ENCODE measurements at regions of chr15 and their contacts with region 1.

Region 1: GRCh38 chr15:101652098-101652782 is at the start of gene TM2D3:
- DNase-seq: peak; percentile 98
- H3K4me3 ChIP-seq: peak within 1 kb of the TSS; percentile 88 to 92
- H3K27ac ChIP-seq: peak within 1 kb of the TSS; percentile 90 to 96
- H3K4me1 ChIP-seq: peaks cover 17 to 22% of the 10 kb centered on the region in 2 experiments; a peak in 3 of 4 replicates
- H3K27me3 ChIP-seq: no peaks in the 10 kb centered on the region
- CTCF ChIP-seq: peak; percentile 61
- EP300 ChIP-seq: no peak; a peak in 1 of 4 replicates
- RAD21 ChIP-seq: peak; percentile 32; the same call in 1 of the 2 replicates
- polyA plus RNA-seq, gene TM2D3: 71.6 and 73.3 TPM in 2 replicates

Region 2: DNA sequence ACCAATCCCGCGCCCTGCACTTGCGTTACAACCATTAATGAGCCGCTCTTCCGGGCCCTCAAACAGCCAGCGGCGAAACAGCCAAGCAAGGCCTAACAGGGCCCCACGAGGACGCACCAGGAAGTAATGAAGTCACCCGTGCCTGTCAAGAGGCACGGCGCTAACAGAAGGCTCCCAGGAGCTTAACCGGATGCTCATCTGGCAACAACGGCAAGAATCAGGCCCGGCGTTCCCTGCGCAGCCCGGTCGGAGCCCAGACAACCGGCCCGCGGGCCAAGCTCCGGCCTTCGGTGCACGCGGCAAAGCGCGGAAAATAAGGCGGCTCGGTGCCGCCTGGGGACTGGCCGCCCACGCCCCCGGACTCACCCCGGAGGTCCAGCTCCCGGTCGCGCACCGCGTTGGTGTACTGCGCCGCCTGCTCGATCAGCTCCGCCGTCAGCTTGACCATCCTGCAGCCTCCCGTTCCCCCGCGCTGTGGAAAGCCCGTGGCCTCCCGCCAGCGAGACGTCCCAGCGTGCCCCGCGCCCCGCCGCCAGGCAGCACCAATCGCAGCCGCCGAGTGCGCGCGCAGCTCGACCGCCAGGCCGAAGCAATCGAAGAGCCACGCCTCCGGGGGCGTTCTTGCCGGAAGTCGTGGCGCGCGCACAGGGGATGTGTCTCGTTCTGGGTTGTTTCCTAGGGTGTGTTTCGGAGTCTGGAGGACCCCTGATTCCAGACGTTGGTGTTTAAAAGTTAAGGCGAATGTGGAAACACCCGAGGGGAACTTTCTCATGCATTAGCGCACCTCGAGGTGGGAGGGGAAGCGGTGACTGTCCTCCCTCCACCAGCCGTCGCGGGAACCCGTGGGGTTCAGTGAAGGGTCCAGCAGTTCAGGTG is 357.3 kb before region 1 on chr15 and contains the start of gene SNRPA1:
- CTCF ChIA-PET with region 1: interaction called, 10 read pairs
- POLR2A ChIA-PET with region 1: interaction called, 3 read pairs
- DNase-seq: peak; percentile 99
- H3K4me3 ChIP-seq: peak within 1 kb of the TSS; percentile 82 to 98
- H3K27ac ChIP-seq: peak within 1 kb of the TSS; percentile 87 to 94
- H3K4me1 ChIP-seq: peaks cover 8 to 12% of the 10 kb centered on the region in 2 experiments; a peak in 2 of 4 replicates
- H3K27me3 ChIP-seq: no peaks in the 10 kb centered on the region
- CTCF ChIP-seq: no peak
- EP300 ChIP-seq: 0 out of 4 replicates have a peak, but pooled peaks of 1 of the 2 experiments have one; percentile 18
- RAD21 ChIP-seq: no peak
- polyA plus RNA-seq, gene SNRPA1: 59.9 and 62.3 TPM in 2 replicates

Region 3: GRCh38 chr15:101318839-101319238 is 333.4 kb before region 1 on chr15:
- CTCF ChIA-PET with region 1: no interaction called
- POLR2A ChIA-PET with region 1: no interaction called
- DNase-seq: peak; percentile 57
- H3K4me3 ChIP-seq: no peak overlapping the region
- H3K27ac ChIP-seq: no peak overlapping the region
- H3K4me1 ChIP-seq: peaks cover 0 to 14% of the 10 kb centered on the region in 2 experiments; a peak in 1 of 4 replicates
- H3K27me3 ChIP-seq: no peaks in the 10 kb centered on the region; the same call in 1 of the 2 replicates
- CTCF ChIP-seq: no peak
- EP300 ChIP-seq: no peak
- RAD21 ChIP-seq: no peak

Region 4: DNA sequence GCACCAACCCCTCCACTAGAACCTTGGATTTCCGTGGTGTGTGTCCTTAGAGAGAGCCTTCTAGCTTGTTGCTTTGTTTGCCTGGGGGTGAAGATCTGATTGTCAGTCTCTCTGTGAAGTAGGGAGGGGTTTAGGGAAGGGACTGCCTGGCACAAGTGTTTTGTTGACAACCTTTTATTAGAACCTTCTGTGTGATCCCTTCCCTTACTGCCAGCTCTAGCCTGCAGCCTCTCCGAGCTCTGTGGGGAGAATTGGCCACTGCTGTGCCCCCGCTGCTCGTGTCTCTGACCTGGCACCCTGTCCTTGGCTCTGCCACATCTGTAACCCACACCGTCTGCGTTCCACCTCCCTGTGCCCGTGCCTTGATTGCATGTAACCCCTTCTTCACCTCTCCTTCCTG is 131.8 kb before region 1 on chr15:
- CTCF ChIA-PET with region 1: no interaction called
- POLR2A ChIA-PET with region 1: no interaction called
- DNase-seq: peak; percentile 12
- H3K4me3 ChIP-seq: no peak overlapping the region
- H3K27ac ChIP-seq: no peak overlapping the region
- H3K4me1 ChIP-seq: peaks cover 0 to 2% of the 10 kb centered on the region in 2 experiments; a peak in 1 of 4 replicates
- H3K27me3 ChIP-seq: no peaks in the 10 kb centered on the region
- CTCF ChIP-seq: no peak
- EP300 ChIP-seq: no peak
- RAD21 ChIP-seq: no peak